AG04449 (cell line): ENCODE measurements at regions of chr10 and their contacts with region 1.

Region 1: DNA sequence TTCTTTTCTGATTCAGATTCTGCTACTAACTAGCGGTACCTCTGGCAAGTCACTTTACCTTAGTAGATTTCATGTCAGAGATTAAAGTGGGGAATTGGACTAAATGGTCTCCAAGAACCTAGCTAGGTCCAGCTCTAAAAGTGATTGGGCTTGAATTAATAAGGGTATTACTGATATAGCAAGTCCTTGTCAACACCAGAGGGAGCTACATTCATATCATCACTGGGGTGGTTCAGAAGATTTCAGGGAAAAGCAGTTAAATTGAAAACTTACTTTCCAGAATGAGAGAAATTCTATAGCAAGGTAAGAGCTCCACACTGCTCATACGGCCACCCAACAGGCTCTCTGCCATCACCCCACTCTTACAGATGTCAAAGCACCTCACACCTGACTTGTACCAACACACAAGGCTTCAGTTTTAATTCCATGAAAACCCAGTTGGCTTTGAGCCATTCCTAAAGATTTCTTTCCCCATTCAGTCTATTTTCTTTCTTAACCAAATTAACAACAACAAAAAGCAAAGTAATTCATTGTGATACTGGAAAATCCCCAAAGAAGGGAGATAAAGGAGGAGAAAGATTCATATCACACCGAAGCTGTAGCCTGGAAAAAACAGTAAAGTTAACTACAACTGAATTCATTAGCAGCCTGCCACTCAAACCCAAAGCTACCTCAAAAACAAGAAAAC is 38.0 kb upstream of the SPOCK2 start:
- DNase-seq: peak; percentile 4
- H3K4me3 ChIP-seq: no peak overlapping the region
- CTCF ChIP-seq: peak; percentile 35

Region 2: GRCh38 chr10:72114706-72115450 is 11.4 kb before region 1 on chr10:
- CTCF ChIA-PET with region 1: interaction called, 62 read pairs
- POLR2A ChIA-PET with region 1: no interaction called
- DNase-seq: no peak
- H3K4me3 ChIP-seq: no peak overlapping the region
- CTCF ChIP-seq: no peak

Region 3: DNA sequence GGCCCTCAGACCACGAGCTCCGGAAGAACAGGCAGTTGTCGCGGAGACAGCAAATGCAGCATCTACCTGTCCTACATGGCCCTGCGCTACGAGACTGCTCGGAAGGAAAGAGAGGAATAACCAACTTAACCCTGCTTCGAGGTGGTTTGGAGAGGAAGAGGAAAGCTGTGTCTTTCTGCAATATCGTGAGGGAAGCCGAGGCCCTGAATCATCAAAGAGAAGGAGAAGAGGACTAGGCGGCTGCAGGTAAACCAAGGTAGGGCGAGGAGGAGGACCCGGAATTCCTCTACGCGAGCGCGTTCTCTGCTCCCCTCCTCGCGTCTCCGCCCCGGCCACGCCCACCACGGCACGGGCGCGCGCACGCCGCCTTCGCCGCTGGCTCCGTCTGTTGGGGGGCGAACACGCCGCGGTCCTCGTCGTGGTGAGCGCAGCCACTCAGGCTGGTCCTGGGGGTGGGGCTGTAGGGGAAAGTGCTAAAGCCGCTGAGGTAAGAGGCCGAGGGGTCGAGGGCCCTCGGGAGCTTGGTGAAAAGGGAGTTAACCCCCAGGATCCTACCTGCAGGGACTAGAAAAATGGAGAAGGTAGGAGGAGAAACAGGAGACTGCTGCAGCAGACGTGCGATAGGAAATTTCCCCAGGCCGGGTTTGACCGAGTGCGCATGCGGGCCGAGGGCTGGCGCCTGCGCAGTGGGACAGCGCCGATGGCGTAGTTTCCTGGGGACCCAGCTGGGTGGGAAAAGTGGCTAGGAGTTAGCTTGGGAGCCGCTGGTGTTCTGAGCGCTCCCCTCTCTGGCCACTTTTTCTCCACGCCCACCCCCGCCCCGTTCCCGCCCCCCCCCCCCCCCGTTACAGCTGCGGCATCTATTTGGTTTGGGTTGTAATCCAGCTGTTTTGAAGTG is 89.6 kb after region 1 on chr10 and contains the starts of genes ANAPC16 and ASCC1:
- CTCF ChIA-PET with region 1: interaction called, 77 read pairs
- POLR2A ChIA-PET with region 1: no interaction called
- DNase-seq: peak; percentile 28
- H3K4me3 ChIP-seq: peak within 1 kb of the TSS; percentile 90
- CTCF ChIP-seq: no peak

Region 4: GRCh38 chr10:72229261-72230251 is 103.2 kb after region 1 on chr10:
- CTCF ChIA-PET with region 1: interaction called, 77 read pairs
- POLR2A ChIA-PET with region 1: no interaction called
- DNase-seq: no peak
- H3K4me3 ChIP-seq: no peak overlapping the region
- CTCF ChIP-seq: no peak

Region 5: GRCh38 chr10:72248468-72249151 is 122.3 kb after region 1 on chr10:
- CTCF ChIA-PET with region 1: no interaction called
- POLR2A ChIA-PET with region 1: no interaction called
- DNase-seq: no peak
- H3K4me3 ChIP-seq: no peak overlapping the region
- CTCF ChIP-seq: no peak

Region 6: DNA sequence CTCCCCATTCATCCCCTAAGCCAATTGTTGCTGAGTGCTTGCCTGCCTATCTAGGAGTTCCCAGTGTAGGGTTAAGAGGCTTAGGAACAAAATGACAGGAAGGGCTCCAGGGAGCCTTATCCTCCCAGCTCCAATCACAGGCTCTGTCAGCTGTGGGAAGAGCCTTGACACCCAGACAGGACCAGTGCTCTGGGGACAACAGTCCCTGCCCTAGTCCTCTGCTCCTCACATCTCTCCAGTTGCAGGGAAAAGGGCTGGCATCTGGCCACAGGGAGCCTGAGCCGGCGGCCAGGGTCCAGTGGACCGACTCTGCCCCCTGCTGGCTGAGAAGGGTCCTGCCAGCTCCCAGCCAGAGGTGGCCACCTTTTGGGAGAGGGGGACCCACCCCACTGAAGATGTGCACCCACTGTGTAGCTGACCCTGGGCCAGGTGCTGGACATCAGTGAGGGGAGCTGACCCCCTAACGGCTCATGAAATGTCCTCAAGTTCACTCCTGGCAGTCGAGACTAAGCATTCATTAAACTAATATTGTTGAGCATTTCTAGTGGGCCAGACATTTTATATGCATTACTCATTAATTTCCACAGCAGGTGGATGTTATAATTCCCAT is 210.8 kb after region 1 on chr10:
- CTCF ChIA-PET with region 1: interaction called, 29 read pairs
- POLR2A ChIA-PET with region 1: no interaction called
- DNase-seq: no peak
- H3K4me3 ChIP-seq: no peak overlapping the region
- CTCF ChIP-seq: peak; percentile 94